B cell (primary cell): ENCODE measurements at regions of chr1 and their contacts with region 1.

Region 1: DNA sequence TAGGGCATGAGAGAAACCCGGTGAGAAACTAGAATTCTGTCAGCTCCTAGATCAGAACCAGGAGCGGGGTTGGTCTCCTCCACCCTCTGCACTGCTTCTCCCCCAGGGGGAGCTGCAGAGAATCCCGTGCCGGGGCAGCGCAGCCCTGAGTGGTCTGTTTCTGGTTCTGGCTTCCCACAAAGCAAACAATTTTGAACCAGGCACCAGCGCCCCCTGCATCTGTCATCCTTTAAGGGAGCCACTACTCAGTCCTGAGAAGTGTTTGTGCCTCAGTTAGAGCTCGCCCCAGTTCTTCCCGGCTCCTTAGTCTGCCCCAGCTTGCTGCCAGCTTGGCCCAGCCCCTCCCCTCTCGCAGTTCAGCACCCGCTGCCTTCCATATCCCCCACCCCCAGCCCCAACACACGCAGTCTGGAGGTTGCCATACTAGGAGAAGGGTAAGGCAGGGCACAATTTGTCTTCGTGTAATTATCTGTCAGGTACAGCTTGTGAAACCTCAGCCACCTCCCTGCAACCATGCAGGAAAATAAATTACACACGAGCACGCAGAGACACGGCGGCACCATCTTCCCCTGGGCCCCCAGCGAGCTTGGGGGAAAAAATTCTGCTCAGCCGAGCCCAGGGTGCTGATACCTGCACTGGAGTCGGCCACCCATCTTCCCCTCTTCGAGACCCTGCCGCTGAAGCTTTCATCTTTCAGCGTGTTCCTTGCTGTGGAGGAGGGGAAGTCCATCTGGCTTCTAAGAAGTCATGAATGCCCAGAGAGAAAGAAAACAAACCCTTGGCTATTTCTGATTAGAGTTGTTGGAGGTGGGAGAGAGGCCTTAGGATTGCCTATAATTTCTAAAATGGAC is 62.6 kb upstream of the CD1D start:
- DNase-seq: peak; percentile 76
- ATAC-seq: peak; percentile 58
- H3K4me3 ChIP-seq: peak overlapping the region in 3 of 5 experiments; percentile 15 to 44 (median 32)
- H3K4me3 Mint-ChIP-seq: peak overlapping the region; percentile 77
- H3K27ac ChIP-seq: no peak overlapping the region
- H3K27ac Mint-ChIP-seq: no peak overlapping the region
- H3K4me1 ChIP-seq: peaks cover 22 to 32% of the 10 kb centered on the region in 2 donors
- H3K4me1 Mint-ChIP-seq: peaks cover 28% of the 10 kb centered on the region
- H3K27me3 ChIP-seq: peaks cover 0 to 38% (median 16%) of the 10 kb centered on the region in 4 experiments
- H3K27me3 Mint-ChIP-seq: peaks cover 35% of the 10 kb centered on the region
- CTCF ChIP-seq: peak; percentile 85

Region 2: GRCh38 chr1:157380523-157380922 is 737.6 kb before region 1 on chr1:
- CTCF ChIA-PET with region 1: no interaction called
- POLR2A ChIA-PET with region 1: no interaction called
- intact Hi-C with region 1: loop called (anchors 2 kb)
- DNase-seq: no peak
- ATAC-seq: no peak
- H3K4me3 ChIP-seq: no peak overlapping the region
- H3K4me3 Mint-ChIP-seq: no peak overlapping the region
- H3K27ac ChIP-seq: no peak overlapping the region
- H3K27ac Mint-ChIP-seq: no peak overlapping the region
- H3K4me1 ChIP-seq: no peaks in the 10 kb centered on the region
- H3K4me1 Mint-ChIP-seq: peaks cover 1% of the 10 kb centered on the region
- H3K27me3 ChIP-seq: peaks cover 0 to 6% (median 0%) of the 10 kb centered on the region in 4 experiments
- H3K27me3 Mint-ChIP-seq: peaks cover 15% of the 10 kb centered on the region
- CTCF ChIP-seq: no peak

Region 3: GRCh38 chr1:158095737-158096335 is 22.2 kb before region 1 on chr1:
- CTCF ChIA-PET with region 1: interaction called, 126 read pairs
- POLR2A ChIA-PET with region 1: no interaction called
- intact Hi-C with region 1: no loop called
- DNase-seq: peak; percentile 49
- ATAC-seq: peak; percentile 51
- H3K4me3 ChIP-seq: no peak overlapping the region
- H3K4me3 Mint-ChIP-seq: no peak overlapping the region
- H3K27ac ChIP-seq: no peak overlapping the region
- H3K27ac Mint-ChIP-seq: no peak overlapping the region
- H3K4me1 ChIP-seq: no peaks in the 10 kb centered on the region
- H3K4me1 Mint-ChIP-seq: no peaks in the 10 kb centered on the region
- H3K27me3 ChIP-seq: no peaks in the 10 kb centered on the region
- H3K27me3 Mint-ChIP-seq: peaks cover 13% of the 10 kb centered on the region
- CTCF ChIP-seq: peak; percentile 65

Region 4: DNA sequence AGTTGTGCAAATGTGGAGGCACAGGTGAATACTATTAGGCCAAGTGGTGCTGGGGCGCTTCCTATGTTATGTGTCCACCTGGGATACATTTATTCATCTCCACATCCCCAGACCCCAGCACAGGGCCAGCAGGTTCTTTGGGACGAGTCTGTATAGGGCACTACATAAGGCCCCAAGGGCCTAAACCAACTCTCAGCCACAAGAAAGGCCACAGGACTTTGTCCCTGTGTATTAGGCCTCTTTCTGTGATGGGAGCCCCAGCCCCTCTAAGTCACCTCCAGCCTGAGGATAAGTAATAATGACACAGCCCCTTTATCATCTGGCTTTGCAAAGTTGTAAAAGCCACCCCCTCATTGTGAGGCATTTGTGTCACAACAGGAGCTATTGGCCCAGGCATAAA is 16.6 kb before region 1 on chr1:
- CTCF ChIA-PET with region 1: interaction called, 126 read pairs
- POLR2A ChIA-PET with region 1: no interaction called
- intact Hi-C with region 1: no loop called
- DNase-seq: no peak
- ATAC-seq: no peak
- H3K4me3 ChIP-seq: no peak overlapping the region
- H3K4me3 Mint-ChIP-seq: no peak overlapping the region
- H3K27ac ChIP-seq: no peak overlapping the region
- H3K27ac Mint-ChIP-seq: no peak overlapping the region
- H3K4me1 ChIP-seq: no peaks in the 10 kb centered on the region
- H3K4me1 Mint-ChIP-seq: no peaks in the 10 kb centered on the region
- H3K27me3 ChIP-seq: peaks cover 0 to 8% (median 2%) of the 10 kb centered on the region in 4 experiments
- H3K27me3 Mint-ChIP-seq: peaks cover 22% of the 10 kb centered on the region
- CTCF ChIP-seq: no peak

Region 5: DNA sequence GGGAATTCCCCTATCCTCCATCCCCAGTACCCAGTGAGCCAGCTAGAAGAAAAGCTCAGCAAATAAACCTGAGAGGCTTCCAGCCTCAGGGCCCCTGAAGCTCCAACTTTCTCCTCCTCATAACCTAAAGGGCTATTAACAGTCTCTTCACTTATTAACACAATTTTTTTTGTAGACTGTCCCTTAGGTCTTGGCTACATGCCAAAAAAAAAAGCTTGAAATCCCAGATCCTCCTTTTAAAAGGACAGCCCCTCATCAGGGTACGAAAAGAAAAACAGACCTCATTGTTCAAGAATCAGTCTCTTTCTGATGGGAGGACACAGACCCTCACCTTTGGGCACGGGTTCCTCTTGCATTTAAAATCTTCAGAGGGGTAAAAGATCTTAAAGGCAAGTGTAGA is 10.2 kb before region 1 on chr1:
- CTCF ChIA-PET with region 1: interaction called, 77 read pairs
- POLR2A ChIA-PET with region 1: no interaction called
- intact Hi-C with region 1: no loop called
- DNase-seq: no peak
- ATAC-seq: no peak
- H3K4me3 ChIP-seq: no peak overlapping the region
- H3K4me3 Mint-ChIP-seq: no peak overlapping the region
- H3K27ac ChIP-seq: no peak overlapping the region
- H3K27ac Mint-ChIP-seq: no peak overlapping the region
- H3K4me1 ChIP-seq: no peaks in the 10 kb centered on the region
- H3K4me1 Mint-ChIP-seq: peaks cover 2% of the 10 kb centered on the region
- H3K27me3 ChIP-seq: peaks cover 0 to 8% (median 2%) of the 10 kb centered on the region in 4 experiments
- H3K27me3 Mint-ChIP-seq: peaks cover 19% of the 10 kb centered on the region
- CTCF ChIP-seq: no peak